IMR-90 (cell line): ENCODE measurements at regions of chr20 and their contacts with region 1.

Region 1: GRCh38 chr20:9978397-9979004 is 56.3 kb upstream of the ANKEF1 start:
- DNase-seq: peak; percentile 89
- ATAC-seq: peak; percentile 97
- H3K4me3 ChIP-seq: no peak overlapping the region
- H3K27ac ChIP-seq: no peak overlapping the region
- H3K4me1 ChIP-seq: no peaks in the 10 kb centered on the region
- H3K27me3 ChIP-seq: peaks cover 3% of the 10 kb centered on the region; the same call in 1 of the 2 replicates
- CTCF ChIP-seq: peak; percentile 98
- POLR2A ChIP-seq: no peak
- RAD21 ChIP-seq: peak; percentile 98

Region 2: DNA sequence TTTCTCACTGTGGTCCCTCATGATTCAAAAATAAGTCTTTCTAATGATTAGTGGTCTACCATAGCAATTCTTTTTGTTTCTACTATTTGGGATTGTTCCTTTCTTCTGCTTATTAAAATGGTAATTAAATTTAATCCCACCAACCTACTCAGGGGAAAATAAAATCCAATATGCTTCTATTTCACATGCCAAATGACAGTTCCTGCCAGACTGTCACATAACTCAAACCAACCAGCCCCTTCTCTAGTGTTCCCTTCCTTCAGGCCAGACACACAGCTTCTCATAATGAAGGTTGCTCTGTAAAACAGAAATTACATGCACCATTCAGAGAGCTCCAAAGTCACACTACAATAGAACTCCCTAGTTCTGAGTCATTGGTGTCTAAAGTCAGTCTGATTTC is 162.9 kb before region 1 on chr20:
- CTCF ChIA-PET with region 1: no interaction called
- POLR2A ChIA-PET with region 1: no interaction called
- dilution Hi-C with region 1: no loop called
- in situ Hi-C with region 1: no loop called
- intact Hi-C with region 1: no loop called
- DNase-seq: no peak
- ATAC-seq: no peak
- H3K4me3 ChIP-seq: no peak overlapping the region
- H3K27ac ChIP-seq: no peak overlapping the region
- H3K4me1 ChIP-seq: no peaks in the 10 kb centered on the region
- H3K27me3 ChIP-seq: no peaks in the 10 kb centered on the region
- CTCF ChIP-seq: no peak
- POLR2A ChIP-seq: no peak
- RAD21 ChIP-seq: no peak

Region 3: DNA sequence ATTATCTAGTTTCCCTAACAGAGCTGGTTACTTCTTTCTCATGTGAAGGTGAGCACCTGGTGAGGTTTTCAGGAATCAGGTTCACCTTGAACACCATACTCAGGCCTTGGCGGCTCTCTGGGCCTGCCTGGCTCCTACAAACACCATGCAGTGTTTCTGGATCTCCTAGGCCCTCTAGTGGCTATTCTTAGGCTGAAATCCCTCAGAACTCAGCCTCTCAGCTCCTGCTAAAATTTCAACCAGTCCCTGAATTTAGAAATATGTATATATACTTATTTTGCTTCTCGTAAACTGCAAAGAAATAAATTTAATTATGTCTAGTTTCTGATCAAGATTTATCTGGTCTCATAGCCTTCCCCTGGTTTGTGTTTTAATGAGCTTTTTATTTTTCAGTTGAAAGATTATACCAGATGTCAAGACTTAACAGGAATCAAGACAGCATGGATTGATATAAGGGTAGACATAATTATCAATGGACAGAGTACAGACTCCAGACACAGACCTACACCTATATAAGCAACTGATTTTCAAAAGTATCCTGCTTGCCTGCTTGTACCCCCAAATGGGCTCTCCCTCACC is 112.2 kb after region 1 on chr20:
- CTCF ChIA-PET with region 1: interaction called, 19 read pairs
- POLR2A ChIA-PET with region 1: no interaction called
- dilution Hi-C with region 1: no loop called
- in situ Hi-C with region 1: loop called (anchors 5 kb)
- intact Hi-C with region 1: loop called (anchors 1 kb)
- DNase-seq: peak; percentile 53
- ATAC-seq: peak; percentile 90
- H3K4me3 ChIP-seq: no peak overlapping the region
- H3K27ac ChIP-seq: no peak overlapping the region
- H3K4me1 ChIP-seq: peaks cover 1% of the 10 kb centered on the region; the same call in 1 of the 2 replicates
- H3K27me3 ChIP-seq: no peaks in the 10 kb centered on the region; the same call in 1 of the 2 replicates
- CTCF ChIP-seq: peak; percentile 74
- POLR2A ChIP-seq: no peak
- RAD21 ChIP-seq: peak; percentile 70

Region 4: DNA sequence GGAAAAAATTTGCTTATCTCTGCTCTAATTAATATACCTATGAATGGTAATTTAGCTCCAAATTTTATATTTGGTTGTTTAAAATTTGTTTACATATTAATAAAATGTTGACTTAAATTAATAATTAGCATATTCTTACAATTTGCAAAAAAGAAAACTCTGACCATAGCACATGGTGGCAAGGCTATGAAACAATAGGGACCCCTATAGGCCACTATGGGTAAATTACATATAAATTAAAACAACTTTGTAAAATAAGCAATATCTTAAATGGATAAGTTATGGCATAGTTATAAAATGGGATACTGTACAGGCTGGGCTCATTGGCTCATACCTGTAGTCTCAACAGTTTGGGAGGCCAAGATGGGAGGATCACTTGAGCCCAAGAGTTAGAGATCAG is 379.5 kb after region 1 on chr20:
- CTCF ChIA-PET with region 1: no interaction called
- POLR2A ChIA-PET with region 1: no interaction called
- dilution Hi-C with region 1: no loop called
- in situ Hi-C with region 1: no loop called
- intact Hi-C with region 1: loop called (anchors 2 kb)
- DNase-seq: peak; percentile 17
- ATAC-seq: peak; percentile 76
- H3K4me3 ChIP-seq: no peak overlapping the region
- H3K27ac ChIP-seq: no peak overlapping the region
- H3K4me1 ChIP-seq: peaks cover 4% of the 10 kb centered on the region; the same call in 1 of the 2 replicates
- H3K27me3 ChIP-seq: no peaks in the 10 kb centered on the region; the same call in 1 of the 2 replicates
- CTCF ChIP-seq: peak; percentile 72
- POLR2A ChIP-seq: no peak
- RAD21 ChIP-seq: peak; percentile 68

Region 5: GRCh38 chr20:10434467-10434831 is 455.9 kb after region 1 on chr20:
- CTCF ChIA-PET with region 1: interaction called, 9 read pairs
- POLR2A ChIA-PET with region 1: no interaction called
- dilution Hi-C with region 1: no loop called
- in situ Hi-C with region 1: loop called (anchors 5 kb)
- intact Hi-C with region 1: loop called (anchors 2 kb)
- DNase-seq: peak; percentile 99
- ATAC-seq: peak; percentile 87
- H3K4me3 ChIP-seq: peak overlapping the region; percentile 89
- H3K27ac ChIP-seq: peak overlapping the region; percentile 33; the same call in 1 of the 2 replicates
- H3K4me1 ChIP-seq: peaks cover 2% of the 10 kb centered on the region; the same call in 1 of the 2 replicates
- H3K27me3 ChIP-seq: no peaks in the 10 kb centered on the region
- CTCF ChIP-seq: no peak
- POLR2A ChIP-seq: peak; percentile 95
- RAD21 ChIP-seq: no peak

Region 6: GRCh38 chr20:10536531-10536930 is 558.0 kb after region 1 on chr20:
- CTCF ChIA-PET with region 1: no interaction called
- POLR2A ChIA-PET with region 1: no interaction called
- dilution Hi-C with region 1: no loop called
- in situ Hi-C with region 1: loop called (anchors 25 kb)
- intact Hi-C with region 1: loop called (anchors 1 kb)
- DNase-seq: peak; percentile 68
- ATAC-seq: peak; percentile 31
- H3K4me3 ChIP-seq: no peak overlapping the region
- H3K27ac ChIP-seq: peak overlapping the region; percentile 4; the same call in 1 of the 2 replicates
- H3K4me1 ChIP-seq: peaks cover 17% of the 10 kb centered on the region
- H3K27me3 ChIP-seq: no peaks in the 10 kb centered on the region
- CTCF ChIP-seq: peak; percentile 60
- POLR2A ChIP-seq: no peak
- RAD21 ChIP-seq: peak; percentile 62

Region 7: GRCh38 chr20:11553603-11554002 is 1575.1 kb after region 1 on chr20:
- CTCF ChIA-PET with region 1: interaction called, 3 read pairs
- POLR2A ChIA-PET with region 1: no interaction called
- dilution Hi-C with region 1: no loop called
- in situ Hi-C with region 1: loop called (anchors 10 kb)
- intact Hi-C with region 1: no loop called
- DNase-seq: peak; percentile 18
- ATAC-seq: peak; percentile 76
- H3K4me3 ChIP-seq: no peak overlapping the region
- H3K27ac ChIP-seq: no peak overlapping the region
- H3K4me1 ChIP-seq: no peaks in the 10 kb centered on the region
- H3K27me3 ChIP-seq: peaks cover 3% of the 10 kb centered on the region
- CTCF ChIP-seq: peak; percentile 48
- POLR2A ChIP-seq: no peak
- RAD21 ChIP-seq: peak; percentile 52